Ovary (tissue), 10 donors: ENCODE measurements at regions of chr19 and their contacts with region 1.

Region 1: GRCh38 chr19:13597640-13598039 is 91.4 kb upstream of the CACNA1A start:
- DNase-seq: peak; percentile 18 to 44 (median 29)
- H3K4me3 ChIP-seq: no peak overlapping the region
- H3K27ac ChIP-seq: no peak overlapping the region
- H3K4me1 ChIP-seq: no peaks in the 10 kb centered on the region
- H3K27me3 ChIP-seq: no peaks in the 10 kb centered on the region
- CTCF ChIP-seq: peak in 2 of 3 donors; percentile 29 to 39
- EP300 ChIP-seq: no peak
- POLR2A ChIP-seq: no peak

Region 2: GRCh38 chr19:12974301-12975220 is 623.1 kb before region 1 on chr19:
- intact Hi-C with region 1: loop called in 2 of 4 experiments (anchors 10 kb)
- DNase-seq: peak in 1 of 5 donors; percentile 34
- H3K4me3 ChIP-seq: no peak overlapping the region
- H3K27ac ChIP-seq: no peak overlapping the region
- H3K4me1 ChIP-seq: peaks cover 2% of the 10 kb centered on the region
- H3K27me3 ChIP-seq: no peaks in the 10 kb centered on the region
- CTCF ChIP-seq: no peak
- EP300 ChIP-seq: no peak
- POLR2A ChIP-seq: no peak

Region 3: GRCh38 chr19:13511947-13512346 is 85.7 kb before region 1 on chr19:
- intact Hi-C with region 1: no loop called
- DNase-seq: no peak
- H3K4me3 ChIP-seq: no peak overlapping the region
- H3K27ac ChIP-seq: no peak overlapping the region
- H3K4me1 ChIP-seq: no peaks in the 10 kb centered on the region
- H3K27me3 ChIP-seq: no peaks in the 10 kb centered on the region
- CTCF ChIP-seq: no peak
- EP300 ChIP-seq: no peak
- POLR2A ChIP-seq: no peak

Region 4: DNA sequence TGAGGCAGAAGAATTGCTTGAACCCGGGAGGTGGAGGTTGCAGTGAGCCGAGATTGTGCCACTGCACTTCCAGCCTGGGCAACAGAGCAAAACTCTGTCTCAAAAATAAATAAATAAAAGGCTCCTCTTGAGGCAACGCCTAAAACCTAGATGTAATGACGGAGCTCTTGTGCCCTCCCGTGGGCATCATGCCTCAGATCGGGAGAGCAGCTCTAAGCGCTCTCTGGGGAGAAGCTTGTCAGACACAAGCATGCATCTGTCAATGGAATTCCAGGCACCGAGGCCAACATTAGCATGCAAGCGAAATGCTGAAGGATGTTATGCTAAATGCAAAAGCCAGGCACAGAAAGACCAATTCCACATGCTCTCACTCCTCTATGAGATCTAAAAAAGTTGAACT is 121.1 kb after region 1 on chr19:
- intact Hi-C with region 1: loop called in 3 of 4 experiments (anchors 5 to 10 kb)
- DNase-seq: no peak
- H3K4me3 ChIP-seq: no peak overlapping the region
- H3K27ac ChIP-seq: no peak overlapping the region
- H3K4me1 ChIP-seq: no peaks in the 10 kb centered on the region
- H3K27me3 ChIP-seq: no peaks in the 10 kb centered on the region
- CTCF ChIP-seq: no peak
- EP300 ChIP-seq: no peak
- POLR2A ChIP-seq: no peak

Region 5: GRCh38 chr19:13861732-13862531 is 264.3 kb after region 1 on chr19:
- intact Hi-C with region 1: loop called in 1 of 4 experiments (anchors 5 kb)
- DNase-seq: peak; percentile 93 to 98 (median 96)
- H3K4me3 ChIP-seq: peak overlapping the region; percentile 30
- H3K27ac ChIP-seq: peak overlapping the region; percentile 76 to 77
- H3K4me1 ChIP-seq: no peaks in the 10 kb centered on the region
- H3K27me3 ChIP-seq: no peaks in the 10 kb centered on the region
- CTCF ChIP-seq: peak; percentile 97 to 99 (median 98)
- EP300 ChIP-seq: no peak
- POLR2A ChIP-seq: peak; percentile 48

Region 6: DNA sequence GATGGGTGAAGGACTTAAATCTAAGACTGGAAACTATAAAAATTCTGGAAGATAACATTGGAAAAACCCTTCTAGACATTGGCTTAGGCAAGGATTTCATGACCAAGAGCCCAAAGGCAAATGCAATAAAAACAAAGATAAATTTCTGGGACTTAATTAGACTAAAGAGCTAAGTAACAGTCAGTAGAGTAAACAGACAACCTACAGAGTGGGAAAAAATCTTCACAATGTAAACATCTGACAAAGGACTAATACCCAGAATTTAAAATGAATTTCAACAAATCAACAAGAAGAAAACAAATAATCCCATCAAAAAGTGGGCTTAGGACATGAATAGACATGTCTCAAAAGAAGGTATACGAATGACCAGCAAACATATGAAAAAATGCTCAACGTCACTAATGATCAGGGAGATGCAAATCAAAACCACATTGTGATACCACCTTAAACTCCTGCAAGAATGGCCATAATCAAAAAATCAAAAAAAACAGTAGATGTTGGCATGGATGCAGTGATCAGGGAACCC is 414.8 kb after region 1 on chr19:
- intact Hi-C with region 1: loop called in 1 of 4 experiments (anchors 2 kb)
- DNase-seq: no peak
- H3K4me3 ChIP-seq: no peak overlapping the region
- H3K27ac ChIP-seq: no peak overlapping the region
- H3K4me1 ChIP-seq: no peaks in the 10 kb centered on the region
- H3K27me3 ChIP-seq: no peaks in the 10 kb centered on the region
- CTCF ChIP-seq: no peak
- EP300 ChIP-seq: no peak
- POLR2A ChIP-seq: no peak

Region 7: GRCh38 chr19:14073261-14073924 is 475.8 kb after region 1 on chr19:
- intact Hi-C with region 1: loop called in 3 of 4 experiments (anchors 10 kb)
- DNase-seq: peak; percentile 57 to 83 (median 72)
- H3K4me3 ChIP-seq: peak overlapping the region; percentile 58
- H3K27ac ChIP-seq: peak overlapping the region in 1 of 2 donors; percentile 44
- H3K4me1 ChIP-seq: peaks cover 7% of the 10 kb centered on the region
- H3K27me3 ChIP-seq: no peaks in the 10 kb centered on the region
- CTCF ChIP-seq: peak; percentile 10 to 84 (median 84)
- EP300 ChIP-seq: no peak
- POLR2A ChIP-seq: no peak